Left ventricle myocardium inferior (tissue), 1 donor: ENCODE measurements at regions of chr1 and their contacts with region 1.

Region 1: GRCh38 chr1:100606438-100606837 is 68.5 kb downstream of the GPR88 start:
- DNase-seq: peak; percentile 24
- H3K4me3 ChIP-seq: no peak overlapping the region
- H3K27ac ChIP-seq: no peak overlapping the region
- H3K4me1 ChIP-seq: no peaks in the 10 kb centered on the region
- H3K27me3 ChIP-seq: no peaks in the 10 kb centered on the region
- CTCF ChIP-seq: peak; percentile 75

Region 2: DNA sequence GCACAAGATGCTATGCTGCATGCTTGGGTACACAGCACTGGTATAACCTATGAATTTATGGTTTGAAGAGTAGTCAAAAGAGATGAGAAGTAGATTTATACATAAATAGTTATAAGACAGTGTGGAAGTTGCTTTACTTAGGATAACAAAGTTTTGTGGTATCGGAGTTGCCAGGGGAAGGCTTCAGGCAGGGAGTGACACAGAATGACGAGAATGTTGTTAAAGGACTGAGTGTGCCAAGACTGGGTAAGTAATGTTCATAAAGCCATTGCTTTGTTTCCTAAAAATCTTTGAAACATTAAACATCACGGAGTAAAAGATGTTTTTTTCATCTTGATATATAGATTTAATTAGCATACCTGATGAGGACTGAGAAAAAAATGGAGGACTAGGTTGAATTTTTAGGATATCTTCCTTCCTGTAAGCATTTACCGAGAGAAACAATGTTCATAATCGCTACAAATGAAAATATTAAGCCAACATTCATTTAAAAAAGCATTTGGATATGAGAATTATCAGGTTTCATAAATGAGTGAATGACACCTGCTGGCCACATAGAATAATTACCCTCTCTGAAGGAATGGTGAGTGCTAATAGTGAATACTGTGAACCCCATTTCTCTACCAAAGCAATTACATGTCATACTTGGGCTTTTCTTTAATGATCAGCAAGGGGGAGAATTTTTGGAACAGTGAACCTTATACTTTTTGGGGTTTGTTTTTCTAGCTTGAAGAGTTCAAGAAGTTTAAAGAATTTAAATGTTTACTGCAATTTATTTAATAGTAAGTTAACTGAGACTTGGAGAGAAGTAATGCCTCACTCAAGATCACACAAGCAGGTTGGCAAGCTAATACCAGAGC is 259.8 kb after region 1 on chr1:
- intact Hi-C with region 1: loop called (anchors 1 kb)
- DNase-seq: no peak
- H3K4me3 ChIP-seq: no peak overlapping the region
- H3K27ac ChIP-seq: no peak overlapping the region
- H3K4me1 ChIP-seq: peaks cover 8% of the 10 kb centered on the region
- H3K27me3 ChIP-seq: no peaks in the 10 kb centered on the region
- CTCF ChIP-seq: peak; percentile 76